ENCODE measurements at regions of chr3 and their contacts with region 1.

Region 1: GRCh38 chr3:45688882-45689756 is at the start of gene SACM1L:
- DNase-seq: peak; percentile 98
- H3K4me3 Mint-ChIP-seq: peak within 1 kb of the TSS; percentile 75
- H3K27ac Mint-ChIP-seq: peak within 1 kb of the TSS; percentile 85
- H3K4me1 Mint-ChIP-seq: peaks cover 44% of the 10 kb centered on the region
- H3K27me3 Mint-ChIP-seq: peaks cover 4% of the 10 kb centered on the region
- total RNA-seq, gene SACM1L: 64.3 to 71.2 TPM

Region 2: GRCh38 chr3:45665101-45665572 is 24.0 kb before region 1 on chr3:
- CTCF ChIA-PET with region 1: interaction called, 32 read pairs
- POLR2A ChIA-PET with region 1: interaction called, 23 read pairs
- intact Hi-C with region 1: loop called (anchors 1 kb)
- DNase-seq: peak; percentile 80
- H3K4me3 Mint-ChIP-seq: peak overlapping the region; percentile 76
- H3K27ac Mint-ChIP-seq: peak overlapping the region; percentile 83
- H3K4me1 Mint-ChIP-seq: peaks cover 51% of the 10 kb centered on the region
- H3K27me3 Mint-ChIP-seq: no peaks in the 10 kb centered on the region

Region 3: DNA sequence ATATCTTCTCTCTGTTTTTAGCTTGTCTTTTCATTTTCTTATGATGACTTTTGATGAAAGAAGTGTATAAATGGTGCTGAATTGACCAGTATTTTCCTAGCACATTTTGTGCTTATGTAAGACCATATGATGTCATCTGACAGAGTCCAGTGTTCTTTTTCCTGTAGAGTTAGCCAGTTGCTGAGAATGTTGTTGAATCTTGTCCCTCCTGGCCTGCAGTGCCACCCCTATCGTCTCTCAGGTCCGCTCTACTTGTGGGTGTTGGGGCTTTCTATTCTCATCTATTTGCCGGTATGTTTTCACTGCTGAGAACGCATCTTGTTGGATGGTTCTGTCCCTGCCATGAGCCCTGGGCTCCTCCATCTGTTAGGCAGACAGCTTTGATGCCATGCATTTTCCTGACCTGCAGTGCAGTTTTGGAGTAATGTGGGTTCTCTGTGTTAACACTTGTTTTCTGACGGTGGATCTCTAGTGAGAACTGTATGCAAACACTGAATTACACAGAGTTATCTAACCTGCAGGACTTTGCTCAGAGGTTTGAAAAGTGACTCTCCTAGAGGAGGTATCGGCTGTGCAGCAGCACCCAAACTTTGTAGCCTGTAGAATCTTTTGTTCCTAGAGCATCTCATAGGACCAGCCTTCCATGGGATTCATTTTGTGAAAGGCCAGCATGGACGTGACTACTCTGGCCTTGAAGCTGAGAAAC is 62.6 kb after region 1 on chr3:
- CTCF ChIA-PET with region 1: no interaction called
- POLR2A ChIA-PET with region 1: no interaction called
- intact Hi-C with region 1: no loop called
- DNase-seq: no peak
- H3K4me3 Mint-ChIP-seq: no peak overlapping the region
- H3K27ac Mint-ChIP-seq: no peak overlapping the region
- H3K4me1 Mint-ChIP-seq: peaks cover 3% of the 10 kb centered on the region
- H3K27me3 Mint-ChIP-seq: no peaks in the 10 kb centered on the region

Region 4: GRCh38 chr3:45841757-45842491 is 152.8 kb after region 1 on chr3 and contains the start of gene LZTFL1:
- CTCF ChIA-PET with region 1: no interaction called
- POLR2A ChIA-PET with region 1: no interaction called
- intact Hi-C with region 1: loop called (anchors 2 kb)
- DNase-seq: peak; percentile 95
- H3K4me3 Mint-ChIP-seq: peak within 1 kb of the TSS; percentile 88
- H3K27ac Mint-ChIP-seq: peak within 1 kb of the TSS; percentile 64
- H3K4me1 Mint-ChIP-seq: peaks cover 11% of the 10 kb centered on the region
- H3K27me3 Mint-ChIP-seq: peaks cover 2% of the 10 kb centered on the region
- total RNA-seq, gene LZTFL1: 3.9 to 6.4 TPM

Region 5: DNA sequence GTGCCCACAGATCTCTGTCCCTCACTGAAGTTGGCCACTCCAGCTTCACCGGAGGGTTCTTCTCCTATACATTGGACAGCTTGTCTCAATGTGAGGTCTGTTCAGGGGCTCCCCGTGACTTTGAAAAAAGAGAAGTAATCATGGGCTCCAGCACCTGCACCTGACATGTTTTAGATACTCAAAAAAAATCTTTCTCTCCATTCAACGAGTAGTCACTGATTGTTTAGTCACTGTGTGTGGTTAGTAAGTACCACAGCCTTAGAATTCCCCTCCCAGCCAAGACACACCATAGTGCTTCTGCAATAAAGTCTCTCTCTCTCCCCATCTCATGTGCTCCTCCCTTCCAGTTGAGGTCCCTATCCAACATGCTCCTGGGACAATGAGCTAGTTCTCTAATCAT is 215.8 kb after region 1 on chr3:
- CTCF ChIA-PET with region 1: no interaction called
- POLR2A ChIA-PET with region 1: no interaction called
- intact Hi-C with region 1: no loop called
- DNase-seq: no peak
- H3K4me3 Mint-ChIP-seq: no peak overlapping the region
- H3K27ac Mint-ChIP-seq: no peak overlapping the region
- H3K4me1 Mint-ChIP-seq: peaks cover 19% of the 10 kb centered on the region
- H3K27me3 Mint-ChIP-seq: peaks cover 2% of the 10 kb centered on the region

Region 6: GRCh38 chr3:45915518-45916231 is 226.6 kb after region 1 on chr3:
- CTCF ChIA-PET with region 1: no interaction called
- POLR2A ChIA-PET with region 1: interaction called, 3 read pairs
- intact Hi-C with region 1: loop called (anchors 5 kb)
- DNase-seq: peak; percentile 91
- H3K4me3 Mint-ChIP-seq: peak overlapping the region; percentile 46
- H3K27ac Mint-ChIP-seq: peak overlapping the region; percentile 61
- H3K4me1 Mint-ChIP-seq: peaks cover 44% of the 10 kb centered on the region
- H3K27me3 Mint-ChIP-seq: peaks cover 19% of the 10 kb centered on the region